ENCODE measurements at regions of chr16 and their contacts with region 1.

Region 1: DNA sequence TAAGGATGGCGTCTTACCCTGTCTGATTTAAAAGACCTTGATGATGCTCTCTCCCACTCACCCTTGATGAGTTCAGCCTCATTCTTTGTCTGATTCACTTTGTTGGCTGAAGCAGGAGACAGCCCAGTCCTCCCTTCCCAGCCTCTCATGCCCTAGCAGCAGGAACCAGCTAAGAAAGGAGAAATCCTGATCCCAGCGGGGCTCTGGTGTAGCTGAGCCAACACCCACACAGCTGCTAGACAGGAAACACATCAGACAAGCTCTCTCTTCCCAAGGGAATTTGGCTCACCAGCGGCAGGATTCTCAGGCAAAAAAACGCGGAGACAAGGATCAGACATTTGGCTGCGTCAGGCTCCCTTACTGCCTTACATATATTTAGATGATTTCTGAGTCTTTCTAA is 211.5 kb downstream of the CDH11 start:
- DNase-seq: peak; percentile 94
- H3K4me3 ChIP-seq: no peak overlapping the region
- CTCF ChIP-seq: no peak

Region 2: GRCh38 chr16:64864232-64864809 is 46.0 kb before region 1 on chr16:
- CTCF ChIA-PET with region 1: no interaction called
- POLR2A ChIA-PET with region 1: interaction called, 11 read pairs
- DNase-seq: peak; percentile 98
- H3K4me3 ChIP-seq: no peak overlapping the region
- CTCF ChIP-seq: no peak